A549 (cell line): ENCODE measurements at regions of chr13 and their contacts with region 1.

Region 1: DNA sequence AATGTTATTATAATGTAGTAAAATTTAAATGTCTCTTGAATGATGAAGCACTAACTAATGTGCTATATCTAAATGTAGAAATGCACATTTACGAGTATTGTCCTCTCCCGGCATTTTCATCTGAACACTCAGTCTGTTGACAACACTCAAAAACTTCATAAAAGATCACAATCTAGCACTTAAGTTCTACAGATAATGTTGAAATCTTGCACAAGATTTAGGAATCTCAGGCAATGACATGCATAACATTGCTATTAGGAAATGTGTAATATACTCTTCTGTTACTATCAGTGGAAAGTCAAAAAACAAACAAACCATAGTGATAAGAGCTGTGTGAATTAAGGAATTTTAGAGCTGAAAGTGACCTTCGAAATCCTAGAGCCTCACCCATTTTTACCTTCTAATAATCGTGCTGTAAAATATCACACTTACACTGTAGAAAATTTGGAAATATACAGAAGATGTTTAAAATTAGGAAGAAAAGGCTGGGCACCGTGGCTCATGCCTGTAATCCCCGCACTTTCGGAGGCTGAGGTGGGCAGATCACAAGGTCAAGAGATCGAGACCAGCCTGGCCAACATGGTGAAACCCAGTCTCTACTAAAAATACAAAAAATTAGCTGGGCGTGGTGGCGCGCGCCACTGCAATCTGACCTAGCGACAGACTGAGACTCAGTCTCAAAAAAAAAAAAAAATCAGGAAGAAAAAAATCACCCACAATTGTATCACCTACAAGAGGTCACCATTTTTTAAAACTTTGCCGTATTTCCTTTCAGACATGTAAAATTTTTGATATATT is 37.7 kb upstream of the XPO4 start:
- DNase-seq: peak in 1 of 2 experiments; percentile 45
- ATAC-seq: peak in 1 of 2 experiments; percentile 13; a peak in 2 of 6 replicates
- H3K4me3 ChIP-seq: no peak overlapping the region
- H3K27ac ChIP-seq: peak overlapping the region; percentile 38 to 72; a peak in 2 of 6 replicates
- H3K4me1 ChIP-seq: peaks cover 20% of the 10 kb centered on the region; the same call in 2 of the 3 replicates
- CTCF ChIP-seq: no peak
- EP300 ChIP-seq: no peak
- POLR2A ChIP-seq: no peak
- RAD21 ChIP-seq: no peak

Region 2: DNA sequence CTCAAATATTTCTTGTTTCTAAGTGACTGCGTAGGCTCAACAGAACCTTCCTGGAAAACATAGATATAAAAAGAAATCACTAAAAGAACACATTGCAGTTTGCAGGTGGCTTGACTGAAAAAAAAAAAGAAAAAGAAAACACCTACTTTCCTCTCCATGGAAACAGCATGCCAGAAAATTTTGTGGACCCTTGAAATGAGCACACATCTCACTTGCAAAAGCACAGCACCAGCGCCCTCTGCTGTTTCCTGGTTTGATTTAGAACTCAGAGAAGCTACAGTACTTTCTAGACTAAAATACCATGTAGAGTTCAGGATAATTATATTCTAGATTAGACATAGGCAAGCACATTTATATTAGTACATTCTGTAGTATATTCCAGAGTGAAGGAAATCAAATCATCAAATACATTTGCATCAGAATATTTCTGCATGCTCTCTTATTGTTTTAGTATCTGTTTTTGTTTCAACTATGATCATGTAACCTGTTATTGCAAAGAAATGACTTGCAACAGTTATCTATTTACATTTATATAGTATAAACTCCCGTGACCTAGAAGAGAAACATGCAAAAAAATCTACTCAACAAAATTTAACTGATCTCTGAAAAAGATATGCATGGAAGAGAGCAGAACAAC is 15.4 kb before region 1 on chr13:
- CTCF ChIA-PET with region 1: interaction called, 11 read pairs
- POLR2A ChIA-PET with region 1: no interaction called
- DNase-seq: peak; percentile 10 to 77
- ATAC-seq: peak; percentile 66 to 84; a peak in 4 of 6 replicates
- H3K4me3 ChIP-seq: no peak overlapping the region
- H3K27ac ChIP-seq: no peak overlapping the region
- H3K4me1 ChIP-seq: no peaks in the 10 kb centered on the region
- CTCF ChIP-seq: peak; percentile 71
- EP300 ChIP-seq: no peak
- POLR2A ChIP-seq: no peak
- RAD21 ChIP-seq: peak; percentile 74 to 79

Region 3: GRCh38 chr13:21133077-21133476 is 192.8 kb after region 1 on chr13:
- CTCF ChIA-PET with region 1: interaction called, 24 read pairs
- POLR2A ChIA-PET with region 1: interaction called, 5 read pairs
- DNase-seq: no peak
- ATAC-seq: no peak
- H3K4me3 ChIP-seq: no peak overlapping the region
- H3K27ac ChIP-seq: no peak overlapping the region; a peak in 1 of 6 replicates
- H3K4me1 ChIP-seq: peaks cover 11% of the 10 kb centered on the region; the same call in 2 of the 3 replicates
- CTCF ChIP-seq: no peak
- EP300 ChIP-seq: no peak
- POLR2A ChIP-seq: no peak
- RAD21 ChIP-seq: no peak

Region 4: GRCh38 chr13:21176220-21176982 is 236.1 kb after region 1 on chr13 and contains the starts of genes MRPL57 and SKA3:
- CTCF ChIA-PET with region 1: interaction called, 12 read pairs
- POLR2A ChIA-PET with region 1: interaction called, 5 read pairs
- DNase-seq: peak; percentile 69 to 92
- ATAC-seq: peak; percentile 96 to 98
- H3K4me3 ChIP-seq: peak within 1 kb of the TSS; percentile 75
- H3K27ac ChIP-seq: peak within 1 kb of the TSS; percentile 92 to 100
- H3K4me1 ChIP-seq: peaks cover 16% of the 10 kb centered on the region; the same call in 2 of the 3 replicates
- CTCF ChIP-seq: no peak
- EP300 ChIP-seq: no peak
- POLR2A ChIP-seq: peak; percentile 90
- RAD21 ChIP-seq: no peak
- polyA plus RNA-seq, gene MRPL57: 19.2 and 23.0 TPM in 2 replicates
- polyA plus RNA-seq, gene SKA3: 15.7 and 19.2 TPM in 2 replicates